ENCODE measurements at regions of chr19 and their contacts with region 1.

Region 1: DNA sequence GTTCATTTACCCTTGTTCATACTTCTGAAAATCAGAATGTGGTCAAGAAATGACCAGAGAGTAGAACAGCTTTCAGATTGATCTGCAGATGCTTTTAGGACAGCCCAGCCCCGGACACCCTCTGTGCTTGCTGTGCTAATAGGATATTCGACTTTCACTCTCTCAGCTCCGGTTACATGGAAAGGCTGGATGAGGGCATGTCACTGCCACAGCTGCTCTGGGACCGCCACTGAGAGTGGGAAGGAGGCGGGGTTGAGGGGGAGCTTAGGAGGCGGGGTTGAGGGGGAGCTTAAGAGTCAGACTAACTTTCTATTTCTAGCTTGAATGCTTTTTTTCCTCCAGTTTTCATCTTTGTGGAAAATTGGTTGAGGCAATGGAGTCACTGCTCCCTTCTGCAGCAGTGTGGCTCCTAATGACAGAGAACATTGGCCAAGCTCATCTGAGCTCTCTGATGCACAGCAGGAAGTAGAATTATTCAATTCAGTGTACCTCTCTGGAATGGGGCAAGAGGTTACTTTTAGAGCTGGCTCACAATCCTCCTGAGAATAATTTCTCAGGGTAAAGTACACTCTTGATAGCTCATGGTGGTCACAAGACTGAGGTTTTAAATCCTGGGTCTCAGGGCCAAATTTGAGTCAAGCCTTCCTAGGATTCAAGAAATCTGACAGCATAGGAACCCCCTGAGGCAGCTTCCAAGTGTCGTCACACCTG is 74.6 kb upstream of the NPAS1 start:
- DNase-seq: peak in 1 of 4 experiments; percentile 31
- ATAC-seq: peak; percentile 49
- H3K4me3 ChIP-seq: no peak overlapping the region
- H3K27ac ChIP-seq: no peak overlapping the region
- H3K4me1 ChIP-seq: no peaks in the 10 kb centered on the region
- H3K27me3 ChIP-seq: no peaks in the 10 kb centered on the region
- CTCF ChIP-seq: no peak
- EP300 ChIP-seq: no peak
- POLR2A ChIP-seq: no peak
- RAD21 ChIP-seq: no peak

Region 2: DNA sequence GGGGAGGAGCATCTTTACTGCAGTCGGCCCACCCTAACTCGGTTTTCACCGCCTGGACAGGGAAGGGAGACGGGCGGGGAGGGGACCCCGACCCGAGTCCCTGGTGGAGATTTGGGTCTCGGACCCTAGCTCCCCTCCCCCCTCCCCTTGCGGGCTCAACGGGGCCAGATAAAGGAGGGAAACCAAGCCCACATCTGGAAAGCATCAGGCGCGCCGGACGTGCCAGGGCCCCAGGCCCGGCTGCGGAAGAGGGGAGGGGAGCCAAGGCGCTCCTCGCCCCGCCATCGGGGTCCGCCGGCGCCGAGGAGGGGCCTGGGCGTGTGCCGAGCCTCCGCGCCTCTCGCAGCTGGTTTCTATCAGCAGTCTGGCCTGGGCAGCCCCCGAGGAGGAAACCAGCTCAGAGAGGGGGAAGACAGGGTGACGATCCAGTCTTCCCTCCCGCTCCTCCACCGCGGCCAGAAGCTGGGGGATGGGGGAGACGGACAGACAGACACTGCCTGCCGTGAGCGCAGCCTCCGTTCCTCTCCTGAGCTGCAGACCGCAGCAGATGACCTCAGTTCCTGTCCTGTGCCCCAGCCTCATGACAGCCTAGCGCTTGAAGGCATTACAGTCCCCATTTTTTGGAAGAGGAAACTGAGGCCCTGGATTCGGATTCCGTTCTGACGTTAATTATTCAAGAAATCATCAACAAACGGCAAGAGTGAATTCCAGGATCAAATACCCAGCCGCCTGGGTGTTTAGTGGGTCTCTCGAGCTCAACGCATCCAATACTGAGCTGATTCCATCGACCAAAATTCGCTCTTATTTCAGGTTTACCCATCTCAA is 305.5 kb before region 1 on chr19:
- CTCF ChIA-PET with region 1: no interaction called
- POLR2A ChIA-PET with region 1: no interaction called
- in situ Hi-C with region 1: no loop called
- intact Hi-C with region 1: no loop called
- DNase-seq: peak; percentile 51 to 78 (median 59)
- ATAC-seq: peak; percentile 44
- H3K4me3 ChIP-seq: peak overlapping the region; percentile 53
- H3K27ac ChIP-seq: peak overlapping the region; percentile 44; the same call in 2 of the 3 replicates
- H3K4me1 ChIP-seq: peaks cover 18 to 43% of the 10 kb centered on the region in 2 experiments; a peak in 4 of 5 replicates
- H3K27me3 ChIP-seq: no peaks in the 10 kb centered on the region
- CTCF ChIP-seq: no peak
- EP300 ChIP-seq: no peak
- POLR2A ChIP-seq: no peak
- RAD21 ChIP-seq: no peak

Region 3: DNA sequence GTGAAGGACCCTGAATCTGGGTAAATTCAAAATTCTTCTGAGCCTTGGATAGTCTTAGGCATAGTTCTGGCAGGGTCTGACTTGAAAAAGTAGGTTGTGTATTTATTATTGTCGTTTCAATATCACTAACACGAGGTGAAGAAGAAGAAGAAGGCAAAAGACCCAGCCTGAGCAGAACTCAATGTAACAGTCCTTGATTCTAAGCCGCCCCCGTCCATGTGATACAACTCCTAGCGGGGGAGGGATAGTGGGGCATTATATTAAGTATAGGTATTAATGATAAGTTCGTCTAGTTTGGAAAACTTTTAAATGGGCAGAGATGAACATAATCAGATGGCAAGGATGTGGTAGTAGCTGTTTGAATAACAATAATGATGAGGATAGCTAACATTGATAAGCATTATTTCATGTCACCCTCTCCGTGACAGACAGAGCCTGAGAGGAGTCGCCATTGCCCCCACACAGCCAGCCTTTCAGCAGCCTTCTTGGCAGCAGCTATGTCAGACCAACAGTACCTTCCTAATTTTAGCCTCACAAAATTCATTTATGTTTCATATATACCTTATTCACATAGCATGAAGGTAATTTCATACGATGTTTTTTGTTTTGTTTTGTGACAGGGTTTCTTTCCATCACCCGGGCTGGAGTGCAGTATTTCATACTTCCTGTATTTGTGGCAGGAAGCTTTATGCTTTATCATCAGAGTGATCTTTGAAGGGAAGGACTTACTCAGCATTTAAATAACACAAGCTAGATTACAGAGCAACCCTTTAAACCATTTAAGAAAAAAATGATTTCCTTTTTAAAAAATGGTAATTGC is 10.1 kb after region 1 on chr19:
- CTCF ChIA-PET with region 1: no interaction called
- POLR2A ChIA-PET with region 1: interaction called, 16 read pairs
- in situ Hi-C with region 1: no loop called
- intact Hi-C with region 1: no loop called
- DNase-seq: peak; percentile 38 to 58 (median 50)
- ATAC-seq: peak; percentile 78
- H3K4me3 ChIP-seq: peak overlapping the region; percentile 19
- H3K27ac ChIP-seq: peak overlapping the region; percentile 85
- H3K4me1 ChIP-seq: peaks cover 15 to 30% of the 10 kb centered on the region in 2 experiments
- H3K27me3 ChIP-seq: no peaks in the 10 kb centered on the region; a peak in 1 of 5 replicates
- CTCF ChIP-seq: no peak
- EP300 ChIP-seq: no peak
- POLR2A ChIP-seq: peak; percentile 78; the same call in 1 of the 2 replicates
- RAD21 ChIP-seq: no peak